ENCODE measurements at regions of chr6 and their contacts with region 1.

Region 1: DNA sequence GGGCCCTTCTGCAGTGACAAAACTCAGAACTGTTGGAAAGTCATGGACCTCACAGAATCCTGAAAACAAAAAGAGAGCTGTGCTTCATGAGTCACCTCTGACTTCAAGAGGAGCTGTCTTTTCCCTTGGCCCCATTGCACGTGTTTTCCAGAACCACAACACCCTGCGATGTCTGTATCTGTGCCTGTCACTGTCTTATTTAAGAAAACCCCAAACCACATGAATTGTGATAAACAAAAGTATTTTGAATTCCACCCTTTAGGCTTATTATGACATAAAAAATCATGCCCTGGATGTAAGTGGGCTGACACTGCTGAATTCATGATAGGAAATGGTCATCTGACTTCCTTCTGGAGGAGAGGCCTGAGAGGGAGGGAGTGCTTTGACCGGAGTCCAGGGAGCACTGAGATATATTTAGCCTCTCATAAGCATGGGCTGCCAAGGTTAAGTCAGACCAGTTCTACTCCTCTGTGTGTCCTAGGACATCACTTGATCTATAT is 96.4 kb upstream of the DUSP22 start:
- DNase-seq: peak in 7 of 9 experiments; percentile 32 to 78 (median 55)
- ATAC-seq: peak; percentile 73
- H3K4me3 ChIP-seq: no peak overlapping the region
- H3K4me3 Mint-ChIP-seq: peak overlapping the region; percentile 18
- H3K27ac ChIP-seq: no peak overlapping the region
- H3K27ac Mint-ChIP-seq: peak overlapping the region; percentile 77
- H3K4me1 ChIP-seq: peaks cover 35% of the 10 kb centered on the region
- H3K4me1 Mint-ChIP-seq: peaks cover 39% of the 10 kb centered on the region
- H3K27me3 ChIP-seq: no peaks in the 10 kb centered on the region
- H3K27me3 Mint-ChIP-seq: no peaks in the 10 kb centered on the region
- CTCF ChIP-seq: no peak

Region 2: GRCh38 chr6:336159-337019 is 140.5 kb after region 1 on chr6:
- CTCF ChIA-PET with region 1: interaction called, 3 read pairs
- POLR2A ChIA-PET with region 1: no interaction called
- intact Hi-C with region 1: loop called in 1 of 2 experiments (anchors 2 kb)
- DNase-seq: peak in 2 of 9 experiments; percentile 23 to 52
- ATAC-seq: no peak
- H3K4me3 ChIP-seq: no peak overlapping the region
- H3K4me3 Mint-ChIP-seq: peak overlapping the region; percentile 38
- H3K27ac ChIP-seq: peak overlapping the region in 1 of 2 experiments; percentile 9
- H3K27ac Mint-ChIP-seq: peak overlapping the region; percentile 50
- H3K4me1 ChIP-seq: peaks cover 54% of the 10 kb centered on the region
- H3K4me1 Mint-ChIP-seq: peaks cover 53% of the 10 kb centered on the region
- H3K27me3 ChIP-seq: no peaks in the 10 kb centered on the region
- H3K27me3 Mint-ChIP-seq: no peaks in the 10 kb centered on the region
- CTCF ChIP-seq: no peak

Region 3: GRCh38 chr6:422433-423054 is 226.6 kb after region 1 on chr6:
- CTCF ChIA-PET with region 1: no interaction called
- POLR2A ChIA-PET with region 1: no interaction called
- intact Hi-C with region 1: no loop called
- DNase-seq: peak in 4 of 9 experiments; percentile 41 to 65 (median 56)
- ATAC-seq: peak; percentile 62
- H3K4me3 ChIP-seq: no peak overlapping the region
- H3K4me3 Mint-ChIP-seq: no peak overlapping the region
- H3K27ac ChIP-seq: no peak overlapping the region
- H3K27ac Mint-ChIP-seq: no peak overlapping the region
- H3K4me1 ChIP-seq: no peaks in the 10 kb centered on the region
- H3K4me1 Mint-ChIP-seq: no peaks in the 10 kb centered on the region
- H3K27me3 ChIP-seq: no peaks in the 10 kb centered on the region
- H3K27me3 Mint-ChIP-seq: no peaks in the 10 kb centered on the region
- CTCF ChIP-seq: no peak

Region 4: GRCh38 chr6:1297746-1298145 is 1101.8 kb after region 1 on chr6:
- CTCF ChIA-PET with region 1: no interaction called
- POLR2A ChIA-PET with region 1: no interaction called
- intact Hi-C with region 1: no loop called
- DNase-seq: no peak
- ATAC-seq: no peak
- H3K4me3 ChIP-seq: no peak overlapping the region
- H3K4me3 Mint-ChIP-seq: no peak overlapping the region
- H3K27ac ChIP-seq: no peak overlapping the region
- H3K27ac Mint-ChIP-seq: no peak overlapping the region
- H3K4me1 ChIP-seq: no peaks in the 10 kb centered on the region
- H3K4me1 Mint-ChIP-seq: no peaks in the 10 kb centered on the region
- H3K27me3 ChIP-seq: peaks cover 0 to 2% of the 10 kb centered on the region in 2 experiments
- H3K27me3 Mint-ChIP-seq: peaks cover 23% of the 10 kb centered on the region
- CTCF ChIP-seq: no peak